GM12878 (cell line): ENCODE measurements at regions of chr9 and their contacts with region 1.

Region 1: DNA sequence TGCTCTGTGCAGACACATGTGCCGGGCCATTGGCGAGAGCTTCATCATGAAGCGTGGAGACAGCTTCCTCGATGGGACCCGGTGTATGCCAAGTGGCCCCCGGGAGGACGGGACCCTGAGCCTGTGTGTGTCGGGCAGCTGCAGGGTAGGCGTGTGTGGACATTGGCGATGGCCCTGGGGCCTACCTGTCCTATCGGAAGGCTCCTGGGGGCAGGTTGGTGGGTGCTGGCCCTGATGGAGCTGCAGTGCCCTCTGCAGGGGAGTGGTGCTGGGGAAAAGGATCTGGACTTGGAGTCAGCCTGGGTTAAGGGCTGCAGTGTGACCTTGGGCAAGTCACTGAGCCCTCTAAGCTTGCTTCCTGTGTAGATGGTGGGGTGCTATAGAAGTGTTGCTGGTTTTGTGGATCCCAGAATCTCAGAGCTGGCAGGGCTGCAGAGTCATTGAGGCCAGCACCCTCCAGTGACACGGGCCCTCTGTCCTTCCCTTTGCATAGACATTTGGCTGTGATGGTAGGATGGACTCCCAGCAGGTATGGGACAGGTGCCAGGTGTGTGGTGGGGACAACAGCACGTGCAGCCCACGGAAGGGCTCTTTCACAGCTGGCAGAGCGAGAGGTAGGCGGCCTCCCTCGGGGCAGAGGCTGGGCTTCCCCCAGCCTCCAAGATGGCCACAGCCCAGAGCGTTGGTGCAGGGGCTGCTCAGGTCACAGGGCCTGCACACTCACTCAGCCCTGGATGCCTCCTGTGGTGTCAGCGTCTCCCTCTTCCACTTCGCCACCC is 15.8 kb downstream of the ADAMTS13 start:
- DNase-seq: no peak
- ATAC-seq: peak; percentile 94
- H3K4me3 ChIP-seq: no peak overlapping the region
- H3K27ac ChIP-seq: no peak overlapping the region
- H3K4me1 ChIP-seq: peaks cover 4% of the 10 kb centered on the region; the same call in 1 of the 2 replicates
- H3K27me3 ChIP-seq: no peaks in the 10 kb centered on the region
- CTCF ChIP-seq: peak; percentile 57 to 82 (median 71)
- EP300 ChIP-seq: no peak
- POLR2A ChIP-seq: no peak
- RAD21 ChIP-seq: peak; percentile 72

Region 2: GRCh38 chr9:133396952-133397351 is 41.0 kb before region 1 on chr9:
- CTCF ChIA-PET with region 1: interaction called, 13 read pairs
- POLR2A ChIA-PET with region 1: no interaction called
- RAD21 ChIA-PET with region 1: no interaction called
- SMC1A ChIA-PET with region 1: no interaction called
- in situ Hi-C with region 1: no loop called
- intact Hi-C with region 1: no loop called
- DNase-seq: no peak
- ATAC-seq: peak; percentile 63
- H3K4me3 ChIP-seq: no peak overlapping the region
- H3K27ac ChIP-seq: no peak overlapping the region
- H3K4me1 ChIP-seq: no peaks in the 10 kb centered on the region
- H3K27me3 ChIP-seq: no peaks in the 10 kb centered on the region
- CTCF ChIP-seq: peak; percentile 4 to 33 (median 27); a peak in 2 of 6 replicates
- EP300 ChIP-seq: no peak
- POLR2A ChIP-seq: no peak
- RAD21 ChIP-seq: 0 out of 2 replicates have a peak, but pooled peaks have one; percentile 9

Region 3: GRCh38 chr9:133406480-133407307 is 31.2 kb before region 1 on chr9:
- CTCF ChIA-PET with region 1: interaction called, 6 read pairs
- POLR2A ChIA-PET with region 1: no interaction called
- RAD21 ChIA-PET with region 1: interaction called, 3 read pairs
- SMC1A ChIA-PET with region 1: interaction called, 3 read pairs
- in situ Hi-C with region 1: no loop called
- intact Hi-C with region 1: loop called (anchors 1 kb)
- DNase-seq: no peak
- ATAC-seq: peak; percentile 97
- H3K4me3 ChIP-seq: no peak overlapping the region
- H3K27ac ChIP-seq: no peak overlapping the region
- H3K4me1 ChIP-seq: no peaks in the 10 kb centered on the region
- H3K27me3 ChIP-seq: no peaks in the 10 kb centered on the region
- CTCF ChIP-seq: peak; percentile 91 to 97 (median 93); a peak in 5 of 6 replicates
- EP300 ChIP-seq: no peak
- POLR2A ChIP-seq: no peak; the same call in none of the 2 replicates
- RAD21 ChIP-seq: peak; percentile 58

Region 4: GRCh38 chr9:133417541-133418461 is 20.1 kb before region 1 on chr9 and contains the start of gene REXO4:
- CTCF ChIA-PET with region 1: interaction called, 15 read pairs
- POLR2A ChIA-PET with region 1: no interaction called
- RAD21 ChIA-PET with region 1: interaction called, 4 read pairs
- SMC1A ChIA-PET with region 1: interaction called, 5 read pairs
- in situ Hi-C with region 1: no loop called
- intact Hi-C with region 1: no loop called
- DNase-seq: peak; percentile 73
- ATAC-seq: peak; percentile 74
- H3K4me3 ChIP-seq: peak within 1 kb of the TSS; percentile 89
- H3K27ac ChIP-seq: peak within 1 kb of the TSS; percentile 90
- H3K4me1 ChIP-seq: peaks cover 51% of the 10 kb centered on the region
- H3K27me3 ChIP-seq: no peaks in the 10 kb centered on the region
- CTCF ChIP-seq: no peak
- EP300 ChIP-seq: no peak
- POLR2A ChIP-seq: peak; percentile 87
- RAD21 ChIP-seq: no peak
- polyA plus RNA-seq, gene REXO4: 2.7 to 8.4 TPM